ENCODE measurements at regions of chr12 and their contacts with region 1.

Region 1: DNA sequence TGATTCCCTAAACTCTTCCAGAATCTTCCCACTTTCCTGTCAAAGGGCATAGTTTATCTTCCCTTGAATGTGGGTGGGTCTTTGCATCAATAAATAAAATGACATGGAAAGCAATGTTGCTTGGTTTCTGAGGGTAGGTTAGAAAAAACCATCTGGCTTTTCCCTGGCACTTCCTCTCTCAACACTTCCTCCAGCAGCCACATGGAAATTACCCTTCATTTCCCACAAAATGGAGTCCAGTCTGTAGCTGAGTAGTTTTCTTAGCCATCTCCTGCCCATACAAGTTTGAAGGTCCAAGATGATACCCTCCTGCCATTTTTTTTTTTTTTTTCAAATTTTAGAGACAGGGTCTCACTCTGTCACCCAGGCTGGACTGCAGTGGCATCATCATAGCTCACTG is 11.1 kb upstream of the NDUFA12 start:
- DNase-seq: no peak
- ATAC-seq: no peak
- H3K4me3 ChIP-seq: no peak overlapping the region
- H3K27ac ChIP-seq: no peak overlapping the region
- H3K4me1 ChIP-seq: no peaks in the 10 kb centered on the region
- H3K27me3 ChIP-seq: no peaks in the 10 kb centered on the region
- CTCF ChIP-seq: no peak

Region 2: DNA sequence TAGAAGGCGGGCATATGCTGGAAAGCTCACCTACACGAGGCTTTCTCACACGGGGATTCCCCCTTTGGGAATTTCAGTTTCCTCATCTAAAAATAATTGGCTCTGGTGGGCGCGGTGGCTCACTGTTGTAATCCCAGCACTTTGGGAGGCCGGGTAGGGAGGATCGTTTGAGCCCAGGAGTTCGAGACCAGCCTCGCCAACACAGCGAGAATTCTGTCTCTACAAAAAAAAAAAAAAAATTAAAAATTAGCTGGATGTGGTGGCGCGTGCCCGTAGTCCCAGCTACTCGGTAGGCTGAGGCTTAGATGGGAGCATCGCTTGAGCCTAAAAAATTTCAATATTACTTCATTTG is 10.7 kb before region 1 on chr12:
- CTCF ChIA-PET with region 1: interaction called, 12 read pairs
- POLR2A ChIA-PET with region 1: no interaction called
- in situ Hi-C with region 1: no loop called
- intact Hi-C with region 1: no loop called
- DNase-seq: no peak
- ATAC-seq: peak; percentile 49
- H3K4me3 ChIP-seq: peak overlapping the region; percentile 77 to 93
- H3K27ac ChIP-seq: peak overlapping the region; percentile 88
- H3K4me1 ChIP-seq: peaks cover 4% of the 10 kb centered on the region; the same call in 1 of the 2 replicates
- H3K27me3 ChIP-seq: no peaks in the 10 kb centered on the region
- CTCF ChIP-seq: no peak

Region 3: GRCh38 chr12:95262808-95263207 is 248.3 kb after region 1 on chr12:
- CTCF ChIA-PET with region 1: no interaction called
- POLR2A ChIA-PET with region 1: no interaction called
- in situ Hi-C with region 1: no loop called
- intact Hi-C with region 1: no loop called
- DNase-seq: no peak
- ATAC-seq: no peak
- H3K4me3 ChIP-seq: no peak overlapping the region
- H3K27ac ChIP-seq: no peak overlapping the region
- H3K4me1 ChIP-seq: no peaks in the 10 kb centered on the region
- H3K27me3 ChIP-seq: no peaks in the 10 kb centered on the region
- CTCF ChIP-seq: no peak